Body of pancreas (tissue), 4 donors: ENCODE measurements at regions of chr12 and their contacts with region 1.

Region 1: GRCh38 chr12:569803-570434 is 93.3 kb downstream of the NINJ2 start:
- DNase-seq: peak; percentile 80 to 88 (median 85)
- ATAC-seq: peak; percentile 83
- H3K4me3 ChIP-seq: peak overlapping the region in 1 of 2 donors; percentile 43
- H3K27ac ChIP-seq: peak overlapping the region; percentile 19 to 83 (median 58)
- H3K4me1 ChIP-seq: peaks cover 27% of the 10 kb centered on the region
- H3K27me3 ChIP-seq: no peaks in the 10 kb centered on the region
- CTCF ChIP-seq: peak; percentile 87 to 93 (median 92)
- POLR2A ChIP-seq: no peak

Region 2: GRCh38 chr12:818733-819132 is 248.8 kb after region 1 on chr12:
- intact Hi-C with region 1: loop called (anchors 5 kb)
- DNase-seq: no peak
- ATAC-seq: no peak
- H3K4me3 ChIP-seq: no peak overlapping the region
- H3K27ac ChIP-seq: no peak overlapping the region
- H3K4me1 ChIP-seq: no peaks in the 10 kb centered on the region
- H3K27me3 ChIP-seq: no peaks in the 10 kb centered on the region
- CTCF ChIP-seq: peak in 1 of 7 experiments; percentile 14
- POLR2A ChIP-seq: no peak

Region 3: DNA sequence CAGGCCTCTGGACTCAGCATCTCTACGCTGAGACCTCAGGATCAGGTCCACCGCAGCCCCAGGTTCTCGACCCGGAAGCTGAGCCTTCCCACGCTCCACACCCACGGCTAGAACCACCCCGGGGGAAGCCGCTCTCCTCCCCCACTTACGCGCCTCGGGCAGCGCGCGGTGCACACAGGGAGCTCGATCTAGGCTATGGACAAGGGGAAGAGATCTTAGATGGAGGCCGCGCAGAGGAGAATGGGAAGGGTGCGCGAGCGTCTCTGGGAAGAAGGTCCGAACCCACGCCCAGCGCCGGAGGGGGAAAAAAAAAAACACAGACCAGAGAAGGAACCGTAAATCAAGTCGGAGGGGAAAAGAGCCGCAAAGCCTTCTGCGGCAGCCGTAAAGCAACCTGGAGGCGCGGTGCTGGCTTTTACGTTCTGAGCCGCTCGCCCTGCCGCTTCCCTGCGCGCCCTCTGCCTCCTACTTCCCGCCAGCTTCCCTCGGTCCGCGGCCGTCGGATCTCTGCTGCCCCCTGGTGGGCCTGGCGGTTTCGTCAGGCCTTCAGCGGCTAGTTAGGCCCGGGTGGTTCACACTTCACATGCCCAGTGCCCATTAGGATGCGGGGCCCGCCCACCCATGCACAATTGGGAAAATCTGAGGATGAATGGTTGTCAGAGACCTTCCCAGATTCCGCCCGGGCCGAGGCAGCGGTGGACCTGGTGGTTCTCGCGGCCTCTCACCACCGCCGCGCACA is 379.7 kb after region 1 on chr12 and contains the start of gene RAD52:
- intact Hi-C with region 1: loop called (anchors 10 kb)
- DNase-seq: peak; percentile 98 to 99 (median 98)
- ATAC-seq: peak; percentile 97
- H3K4me3 ChIP-seq: peak within 1 kb of the TSS; percentile 27 to 60
- H3K27ac ChIP-seq: peak within 1 kb of the TSS; percentile 76 to 93 (median 82)
- H3K4me1 ChIP-seq: peaks cover 12% of the 10 kb centered on the region
- H3K27me3 ChIP-seq: no peaks in the 10 kb centered on the region
- CTCF ChIP-seq: peak; percentile 96 to 99 (median 98)
- POLR2A ChIP-seq: peak; percentile 60 to 88 (median 88)
- total RNA-seq, gene RAD52: 10.5 to 13.5 TPM